ENCODE measurements at regions of chr6 and their contacts with region 1.

Region 1: DNA sequence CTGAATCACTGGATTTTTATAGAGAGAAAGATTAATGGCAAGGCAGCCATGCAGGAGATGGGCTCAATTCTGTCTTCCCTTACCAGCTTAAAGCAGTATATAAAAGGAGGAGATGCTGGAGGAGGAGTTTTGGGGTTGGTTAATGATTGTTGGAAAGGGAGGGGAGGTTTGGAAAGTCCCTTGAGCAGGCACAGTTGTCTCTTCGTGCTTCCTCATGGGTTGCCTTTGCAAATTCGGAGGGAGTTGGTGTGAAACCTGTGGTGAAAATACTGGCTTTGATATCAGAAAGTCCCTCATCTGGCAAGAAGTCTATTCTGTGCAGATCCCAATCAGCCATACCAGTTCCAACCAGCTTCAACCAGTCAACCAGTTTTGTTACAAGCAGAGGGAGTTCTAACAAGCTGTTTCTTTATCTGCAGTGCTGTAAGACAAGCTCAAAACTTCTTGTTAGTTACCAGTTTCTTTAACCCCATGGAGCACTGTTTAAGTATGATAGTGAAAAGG is 107.0 kb downstream of the HIVEP1 start:
- DNase-seq: no peak
- ATAC-seq: no peak
- H3K4me3 ChIP-seq: no peak overlapping the region
- H3K27ac ChIP-seq: no peak overlapping the region
- H3K4me1 ChIP-seq: peaks cover 0 to 10% (median 0%) of the 10 kb centered on the region in 12 donors
- H3K27me3 ChIP-seq: no peaks in the 10 kb centered on the region
- CTCF ChIP-seq: no peak
- POLR2A ChIP-seq: no peak

Region 2: GRCh38 chr6:12060780-12061619 is 58.1 kb before region 1 on chr6:
- intact Hi-C with region 1: no loop called
- DNase-seq: peak; percentile 49 to 74 (median 70)
- ATAC-seq: peak; percentile 62 to 83 (median 80)
- H3K4me3 ChIP-seq: peak overlapping the region in 3 of 12 donors; percentile 4 to 38 (median 13)
- H3K27ac ChIP-seq: peak overlapping the region in 1 of 12 donors; percentile 14
- H3K4me1 ChIP-seq: peaks cover 0 to 50% (median 10%) of the 10 kb centered on the region in 12 donors
- H3K27me3 ChIP-seq: no peaks in the 10 kb centered on the region
- CTCF ChIP-seq: no peak
- POLR2A ChIP-seq: no peak

Region 3: DNA sequence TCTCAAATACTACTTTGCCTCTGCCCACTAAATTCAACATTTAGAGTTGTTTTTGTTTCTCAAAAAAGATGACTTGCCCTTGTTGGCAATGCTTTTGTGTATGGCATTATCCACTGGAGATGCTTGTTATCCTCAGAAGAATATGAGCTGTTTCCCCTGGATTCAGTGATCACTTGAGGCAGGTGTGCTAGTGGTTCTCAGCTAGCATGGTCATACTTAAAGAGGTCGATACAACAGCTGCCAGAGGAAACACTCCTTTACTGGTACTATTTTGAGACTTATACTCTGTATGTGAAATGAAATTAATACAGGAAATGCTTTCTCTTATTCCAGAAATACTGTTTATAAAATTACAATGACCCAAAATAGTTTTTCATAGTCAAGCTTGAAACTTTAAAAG is 15.4 kb after region 1 on chr6:
- intact Hi-C with region 1: loop called in 1 of 10 experiments (anchors 2 kb)
- DNase-seq: no peak
- ATAC-seq: no peak
- H3K4me3 ChIP-seq: no peak overlapping the region
- H3K27ac ChIP-seq: no peak overlapping the region
- H3K4me1 ChIP-seq: peaks cover 0 to 28% (median 5%) of the 10 kb centered on the region in 12 donors
- H3K27me3 ChIP-seq: no peaks in the 10 kb centered on the region
- CTCF ChIP-seq: no peak
- POLR2A ChIP-seq: no peak

Region 4: GRCh38 chr6:12189661-12190060 is 70.5 kb after region 1 on chr6:
- intact Hi-C with region 1: loop called in 1 of 10 experiments (anchors 2 kb)
- DNase-seq: no peak
- ATAC-seq: no peak
- H3K4me3 ChIP-seq: no peak overlapping the region
- H3K27ac ChIP-seq: no peak overlapping the region
- H3K4me1 ChIP-seq: no peaks in the 10 kb centered on the region
- H3K27me3 ChIP-seq: no peaks in the 10 kb centered on the region
- CTCF ChIP-seq: no peak
- POLR2A ChIP-seq: no peak